Tibial artery (tissue), 4 donors: ENCODE measurements at regions of chr11 and their contacts with region 1.

Region 1: DNA sequence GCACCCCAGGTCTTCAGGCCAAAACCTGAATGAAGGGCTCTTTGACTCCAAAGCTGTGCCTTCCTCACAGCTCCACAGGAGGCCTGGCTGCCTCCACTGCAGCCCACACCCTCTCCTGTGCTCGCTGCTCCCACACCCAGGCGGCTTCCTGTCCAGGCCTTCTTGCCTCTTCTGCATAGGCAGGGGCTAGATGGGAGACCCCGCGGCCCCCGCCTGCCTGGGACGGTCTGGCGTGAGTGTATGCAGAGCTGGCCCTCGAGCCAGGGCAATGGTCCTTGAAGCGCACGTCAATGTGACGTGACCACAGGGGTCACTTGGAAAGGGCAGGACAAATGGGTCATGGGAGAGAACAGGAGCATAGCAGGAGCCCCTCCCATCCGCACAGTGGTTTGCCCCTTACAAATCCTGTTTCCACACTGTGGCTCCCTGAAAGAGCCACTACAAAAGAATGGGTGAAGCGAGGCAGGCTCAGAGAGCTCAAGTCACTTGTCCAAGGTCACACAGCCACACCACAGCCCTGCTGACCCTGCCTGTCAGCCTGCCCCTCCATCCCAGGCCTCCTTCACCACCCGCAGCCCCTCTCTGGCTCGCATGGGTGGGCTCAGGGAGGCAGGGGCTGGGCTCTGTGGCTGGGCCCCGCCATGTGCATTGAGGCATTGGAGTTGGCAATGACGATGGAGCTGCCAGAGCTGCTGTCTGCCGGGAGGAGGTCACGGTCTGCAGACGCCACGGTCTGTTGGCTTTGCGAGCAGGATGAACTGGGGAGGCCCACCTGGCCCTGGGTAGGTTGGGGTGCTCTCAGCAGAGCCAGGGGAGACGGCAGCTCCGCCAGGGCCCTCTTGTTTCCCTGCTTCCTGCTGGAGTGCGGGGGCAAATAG is 71.2 kb upstream of the WNT11 start:
- DNase-seq: no peak
- H3K4me3 ChIP-seq: no peak overlapping the region
- H3K27ac ChIP-seq: no peak overlapping the region
- H3K4me1 ChIP-seq: no peaks in the 10 kb centered on the region
- H3K27me3 ChIP-seq: no peaks in the 10 kb centered on the region
- CTCF ChIP-seq: no peak

Region 2: GRCh38 chr11:75474878-75475766 is 802.4 kb before region 1 on chr11:
- intact Hi-C with region 1: no loop called
- DNase-seq: no peak
- H3K4me3 ChIP-seq: no peak overlapping the region
- H3K27ac ChIP-seq: no peak overlapping the region
- H3K4me1 ChIP-seq: peaks cover 0 to 23% (median 2%) of the 10 kb centered on the region in 4 donors
- H3K27me3 ChIP-seq: no peaks in the 10 kb centered on the region
- CTCF ChIP-seq: no peak

Region 3: GRCh38 chr11:75814686-75815344 is 462.7 kb before region 1 on chr11 and contains the start of gene UVRAG:
- intact Hi-C with region 1: no loop called
- DNase-seq: peak; percentile 99
- H3K4me3 ChIP-seq: peak within 1 kb of the TSS; percentile 87 to 91
- H3K27ac ChIP-seq: peak within 1 kb of the TSS; percentile 91 to 94
- H3K4me1 ChIP-seq: peaks cover 0 to 45% (median 11%) of the 10 kb centered on the region in 4 donors
- H3K27me3 ChIP-seq: no peaks in the 10 kb centered on the region
- CTCF ChIP-seq: peak; percentile 18 to 51

Region 4: GRCh38 chr11:76152086-76152681 is 125.4 kb before region 1 on chr11:
- intact Hi-C with region 1: no loop called
- DNase-seq: peak; percentile 92 to 93
- H3K4me3 ChIP-seq: peak overlapping the region; percentile 26 to 31
- H3K27ac ChIP-seq: no peak overlapping the region
- H3K4me1 ChIP-seq: peaks cover 0 to 10% (median 4%) of the 10 kb centered on the region in 4 donors
- H3K27me3 ChIP-seq: no peaks in the 10 kb centered on the region
- CTCF ChIP-seq: peak; percentile 93 to 97

Region 5: GRCh38 chr11:76243193-76243956 is 34.2 kb before region 1 on chr11:
- intact Hi-C with region 1: loop called (anchors 1 kb)
- DNase-seq: no peak
- H3K4me3 ChIP-seq: no peak overlapping the region
- H3K27ac ChIP-seq: no peak overlapping the region
- H3K4me1 ChIP-seq: no peaks in the 10 kb centered on the region
- H3K27me3 ChIP-seq: peaks cover 0 to 21% of the 10 kb centered on the region in 2 donors
- CTCF ChIP-seq: no peak